Head of caudate nucleus (tissue), 42 donors: ENCODE measurements at regions of chr6 and their contacts with region 1.

Region 1: DNA sequence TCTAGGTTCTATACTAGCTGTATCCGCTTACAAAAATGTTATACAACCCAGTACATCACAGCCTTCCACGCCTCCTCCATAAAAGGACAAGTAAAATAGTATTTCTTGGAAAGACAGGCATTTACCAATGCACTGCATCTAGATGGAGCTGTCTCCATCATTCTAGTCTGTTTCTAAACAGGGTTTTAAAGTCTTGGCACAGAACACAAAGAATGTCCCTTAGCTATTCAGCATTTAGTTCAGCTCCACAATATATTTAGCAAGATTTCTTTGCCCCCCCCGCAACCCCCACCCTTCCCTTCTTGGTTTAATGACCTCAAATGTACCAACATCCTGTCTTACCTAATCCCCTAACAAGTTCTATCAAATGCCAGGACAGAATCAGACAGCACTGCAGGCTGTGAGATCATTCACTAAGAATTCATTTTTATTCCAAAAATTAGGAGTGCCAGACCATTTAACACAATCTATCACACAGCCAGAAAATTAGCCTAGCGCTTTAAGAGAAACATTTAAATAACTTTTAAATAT is 198.6 kb downstream of the BACH2 start:
- DNase-seq: peak in 7 of 42 donors; percentile 19 to 60 (median 28)

Region 2: DNA sequence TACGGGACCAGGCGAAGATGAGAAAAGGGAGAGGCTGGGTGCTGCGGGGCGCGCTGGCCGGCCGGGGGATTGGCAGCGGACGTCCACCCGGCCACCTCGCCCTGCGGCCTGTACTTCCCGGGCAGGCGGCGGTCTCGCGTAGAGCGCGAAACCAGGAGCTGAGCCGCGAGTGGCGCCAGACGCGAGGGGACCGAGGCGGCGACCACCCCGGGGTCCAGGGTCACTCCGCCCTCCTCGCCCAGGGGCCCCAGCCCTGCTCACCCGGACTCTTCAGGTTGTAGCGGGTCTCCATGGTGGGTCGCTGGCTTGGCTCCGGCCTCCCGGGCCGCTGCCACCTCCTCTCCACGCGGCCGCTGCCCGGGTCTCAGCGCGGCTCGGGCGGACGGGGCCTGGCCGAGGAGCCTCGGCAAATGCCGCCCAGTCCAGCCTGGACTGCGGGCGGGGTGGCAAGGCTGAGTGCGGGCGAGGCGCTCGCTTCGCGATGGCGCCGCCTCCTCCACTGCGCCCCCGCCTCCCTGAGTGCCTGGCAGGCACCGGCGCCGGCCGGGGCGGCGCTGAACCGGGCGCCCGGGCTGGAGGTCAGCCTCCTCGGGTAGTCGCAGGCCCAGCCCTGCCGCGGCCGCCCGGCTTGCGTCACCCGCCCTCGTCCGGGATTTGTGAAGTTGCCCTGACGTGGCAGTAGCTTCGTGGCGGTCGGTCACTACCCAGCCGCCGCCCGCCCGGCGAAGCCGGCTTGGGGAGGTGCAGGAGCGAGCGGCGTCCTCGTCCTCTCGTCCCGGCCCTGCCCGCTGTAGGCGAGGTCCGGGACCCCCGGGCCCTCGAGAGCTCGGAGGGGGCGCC is 745.6 kb before region 1 on chr6 and contains the start of gene UBE2J1:
- intact Hi-C with region 1: no loop called
- DNase-seq: peak; percentile 63 to 94 (median 88)

Region 3: GRCh38 chr6:90216072-90216977 is 118.3 kb after region 1 on chr6:
- intact Hi-C with region 1: loop called (anchors 10 kb)
- DNase-seq: peak in 3 of 42 donors; percentile 11 to 23 (median 15)